ENCODE measurements at regions of chr5 and their contacts with region 1.

Region 1: DNA sequence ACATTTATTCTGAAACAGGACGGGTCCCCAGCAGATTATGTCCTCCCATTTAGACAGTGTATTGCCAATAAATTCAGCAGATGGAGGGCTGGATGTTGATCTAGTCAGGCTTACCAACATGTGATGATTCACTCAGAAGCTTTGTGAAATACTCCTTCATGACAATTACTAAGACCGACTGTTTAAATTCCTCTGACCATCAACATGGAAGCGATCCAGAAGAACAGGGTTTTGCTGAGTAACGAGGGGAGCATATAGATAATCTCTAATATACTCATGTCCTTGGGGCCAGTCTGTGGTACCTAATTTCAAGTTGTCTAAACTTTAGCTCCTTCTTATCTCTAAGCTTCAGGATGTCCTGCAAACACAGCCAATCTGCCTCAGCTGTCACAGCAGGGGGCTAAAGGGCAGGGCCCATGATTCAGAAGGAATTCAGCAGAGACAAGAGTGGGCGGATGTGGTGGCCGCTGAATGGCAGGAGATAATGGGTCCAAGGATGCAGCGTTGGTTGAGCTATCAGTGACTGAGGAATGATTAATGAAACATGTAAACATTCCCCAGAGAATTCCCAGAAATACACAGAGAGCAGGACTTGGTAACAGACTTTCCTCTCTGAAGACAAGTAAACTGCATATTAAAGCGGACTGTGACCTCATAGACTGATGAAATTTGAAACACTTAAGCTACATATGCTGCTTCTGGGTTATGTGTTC is 109.4 kb downstream of the ANKRD55 start:
- DNase-seq: peak; percentile 93 to 100 (median 94)
- ATAC-seq: peak; percentile 97
- H3K4me3 ChIP-seq: no peak overlapping the region
- H3K27ac ChIP-seq: peak overlapping the region; percentile 62
- H3K4me1 ChIP-seq: peaks cover 7 to 19% of the 10 kb centered on the region in 2 experiments
- H3K27me3 ChIP-seq: no peaks in the 10 kb centered on the region
- CTCF ChIP-seq: no peak
- EP300 ChIP-seq: peak; percentile 99
- POLR2A ChIP-seq: no peak
- RAD21 ChIP-seq: peak; percentile 35 to 58

Region 2: GRCh38 chr5:56088967-56089829 is 34.5 kb before region 1 on chr5:
- CTCF ChIA-PET with region 1: no interaction called
- POLR2A ChIA-PET with region 1: interaction called, 3 read pairs
- in situ Hi-C with region 1: no loop called
- intact Hi-C with region 1: loop called (anchors 5 kb)
- DNase-seq: no peak
- ATAC-seq: peak; percentile 59
- H3K4me3 ChIP-seq: no peak overlapping the region
- H3K27ac ChIP-seq: no peak overlapping the region
- H3K4me1 ChIP-seq: peaks cover 7 to 20% of the 10 kb centered on the region in 2 experiments
- H3K27me3 ChIP-seq: no peaks in the 10 kb centered on the region
- CTCF ChIP-seq: no peak
- EP300 ChIP-seq: no peak
- POLR2A ChIP-seq: no peak
- RAD21 ChIP-seq: no peak

Region 3: DNA sequence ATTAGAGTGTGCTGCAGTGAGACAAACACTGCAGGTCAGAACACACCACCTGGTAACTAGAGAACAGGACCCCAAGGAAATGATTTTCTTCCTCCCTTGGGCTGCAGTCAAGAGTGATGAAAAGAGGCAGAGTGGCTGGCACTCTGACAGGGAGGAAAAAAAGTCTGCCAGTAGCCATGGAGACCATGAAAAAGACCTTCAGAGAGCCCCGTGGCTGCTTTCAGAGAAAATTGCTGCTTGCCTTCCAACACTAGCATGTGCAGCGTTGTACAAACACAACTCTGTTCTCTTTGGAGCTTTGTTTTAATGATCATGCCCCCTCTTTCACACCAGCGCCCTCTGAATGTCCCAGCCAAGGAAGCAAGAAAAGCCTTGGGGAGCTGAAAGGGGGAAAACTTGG is 40.7 kb after region 1 on chr5:
- CTCF ChIA-PET with region 1: no interaction called
- POLR2A ChIA-PET with region 1: no interaction called
- in situ Hi-C with region 1: no loop called
- intact Hi-C with region 1: loop called (anchors 5 kb)
- DNase-seq: no peak
- ATAC-seq: no peak
- H3K4me3 ChIP-seq: no peak overlapping the region
- H3K27ac ChIP-seq: no peak overlapping the region
- H3K4me1 ChIP-seq: peaks cover 7 to 24% of the 10 kb centered on the region in 2 experiments; a peak in 4 of 5 replicates
- H3K27me3 ChIP-seq: peaks cover 0 to 12% of the 10 kb centered on the region in 2 experiments; a peak in 2 of 5 replicates
- CTCF ChIP-seq: no peak
- EP300 ChIP-seq: no peak
- POLR2A ChIP-seq: no peak
- RAD21 ChIP-seq: no peak

Region 4: GRCh38 chr5:56375011-56375410 is 251.3 kb after region 1 on chr5:
- CTCF ChIA-PET with region 1: no interaction called
- POLR2A ChIA-PET with region 1: no interaction called
- in situ Hi-C with region 1: no loop called
- intact Hi-C with region 1: no loop called
- DNase-seq: no peak
- ATAC-seq: no peak
- H3K4me3 ChIP-seq: no peak overlapping the region
- H3K27ac ChIP-seq: no peak overlapping the region
- H3K4me1 ChIP-seq: no peaks in the 10 kb centered on the region
- H3K27me3 ChIP-seq: no peaks in the 10 kb centered on the region
- CTCF ChIP-seq: no peak
- EP300 ChIP-seq: no peak
- POLR2A ChIP-seq: no peak
- RAD21 ChIP-seq: no peak